Esophagus muscularis mucosa (tissue), 4 donors: ENCODE measurements at regions of chr3 and their contacts with region 1.

Region 1: GRCh38 chr3:123066896-123067688 is at the start of gene PDIA5:
- DNase-seq: peak; percentile 97
- H3K4me3 ChIP-seq: peak within 1 kb of the TSS; percentile 83 to 95 (median 86)
- H3K27ac ChIP-seq: peak within 1 kb of the TSS; percentile 75 to 92 (median 82)
- H3K4me1 ChIP-seq: peaks cover 27 to 44% (median 43%) of the 10 kb centered on the region in 4 donors
- H3K27me3 ChIP-seq: no peaks in the 10 kb centered on the region
- CTCF ChIP-seq: no peak
- EP300 ChIP-seq: no peak
- POLR2A ChIP-seq: peak; percentile 65
- total RNA-seq, gene PDIA5: 12.5 to 16.4 (median 15.1) TPM

Region 2: GRCh38 chr3:123201566-123202427 is 134.7 kb after region 1 on chr3 and contains the start of gene SEC22A:
- intact Hi-C with region 1: loop called (anchors 10 kb)
- DNase-seq: peak; percentile 97
- H3K4me3 ChIP-seq: peak within 1 kb of the TSS; percentile 66 to 92 (median 91)
- H3K27ac ChIP-seq: peak within 1 kb of the TSS; percentile 82 to 91 (median 87)
- H3K4me1 ChIP-seq: peaks cover 5 to 22% (median 16%) of the 10 kb centered on the region in 4 donors
- H3K27me3 ChIP-seq: no peaks in the 10 kb centered on the region
- CTCF ChIP-seq: peak in 1 of 3 experiments; percentile 4
- EP300 ChIP-seq: no peak
- POLR2A ChIP-seq: peak; percentile 23
- total RNA-seq, gene SEC22A: 12.0 to 29.9 (median 20.0) TPM

Region 3: DNA sequence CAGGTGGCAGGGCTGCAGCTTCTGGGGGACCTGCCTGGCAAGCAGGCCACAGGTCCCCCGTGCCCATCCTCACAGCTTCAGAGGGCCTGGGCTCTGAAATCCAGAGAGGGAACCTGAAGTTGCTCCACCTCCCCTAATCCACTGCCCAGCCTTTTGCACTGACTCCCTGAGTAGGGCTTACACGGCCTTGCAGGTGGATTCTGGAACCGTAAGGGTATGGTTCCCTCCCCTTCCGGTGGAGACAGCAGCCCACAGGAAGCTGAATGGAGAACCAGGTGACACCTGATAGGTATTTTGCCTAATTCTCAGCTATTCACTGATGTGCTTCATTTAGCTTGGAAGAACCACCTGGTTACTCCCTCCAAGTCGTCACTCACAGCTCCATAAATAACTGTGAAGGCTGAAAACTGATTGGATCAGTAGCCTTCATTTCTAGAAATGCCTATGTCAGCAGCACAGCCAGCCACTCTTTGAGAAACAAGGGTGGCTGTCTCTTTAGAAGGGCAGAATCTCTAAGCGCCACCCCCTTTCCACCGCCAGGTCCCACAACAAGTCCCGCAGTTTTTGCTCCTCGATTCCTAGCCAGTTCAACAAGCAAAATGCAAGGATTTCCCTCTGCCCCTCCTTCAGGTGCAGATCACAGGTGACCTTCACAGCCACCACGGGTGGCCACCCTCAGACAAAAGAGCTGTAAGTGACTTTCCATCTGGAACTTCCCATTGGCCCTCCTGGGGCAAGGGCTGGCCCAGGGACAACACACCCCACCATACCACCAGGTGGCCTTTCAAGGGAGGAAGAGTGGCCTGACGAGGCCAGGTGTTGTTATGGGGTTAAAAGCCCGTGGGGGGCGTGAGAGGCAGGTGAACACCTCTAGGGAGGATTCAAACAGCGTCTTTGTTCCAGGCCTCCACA is 247.5 kb after region 1 on chr3:
- intact Hi-C with region 1: no loop called
- DNase-seq: no peak
- H3K4me3 ChIP-seq: no peak overlapping the region
- H3K27ac ChIP-seq: peak overlapping the region in 3 of 4 donors; percentile 44 to 64 (median 63)
- H3K4me1 ChIP-seq: peaks cover 0 to 35% (median 29%) of the 10 kb centered on the region in 4 donors
- H3K27me3 ChIP-seq: no peaks in the 10 kb centered on the region
- CTCF ChIP-seq: no peak
- EP300 ChIP-seq: no peak
- POLR2A ChIP-seq: no peak